ENCODE measurements at regions of chr2 and their contacts with region 1.

Region 1: DNA sequence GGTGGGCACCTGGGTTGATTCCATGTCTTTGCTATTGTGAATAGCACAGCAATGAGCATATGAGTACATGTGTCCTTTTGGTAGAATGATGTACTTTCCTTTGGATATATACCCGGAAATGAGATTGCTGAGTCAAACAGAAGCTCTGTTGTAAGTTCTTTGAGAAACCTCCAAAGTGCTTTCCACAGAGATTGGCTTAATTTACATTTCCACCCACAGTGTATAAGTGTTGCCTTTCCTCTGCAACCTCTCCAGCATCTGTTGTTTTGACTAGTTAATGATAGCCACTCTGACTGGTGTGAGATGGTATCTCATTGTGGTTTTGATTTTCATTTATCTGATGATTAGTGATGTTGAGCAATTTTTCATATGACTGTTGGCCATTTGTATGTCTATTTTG is 194.8 kb downstream of the ZNF804A start:
- DNase-seq: no peak
- H3K4me3 Mint-ChIP-seq: no peak overlapping the region
- H3K27ac Mint-ChIP-seq: no peak overlapping the region
- H3K4me1 Mint-ChIP-seq: peaks cover 3% of the 10 kb centered on the region
- H3K27me3 Mint-ChIP-seq: no peaks in the 10 kb centered on the region

Region 2: DNA sequence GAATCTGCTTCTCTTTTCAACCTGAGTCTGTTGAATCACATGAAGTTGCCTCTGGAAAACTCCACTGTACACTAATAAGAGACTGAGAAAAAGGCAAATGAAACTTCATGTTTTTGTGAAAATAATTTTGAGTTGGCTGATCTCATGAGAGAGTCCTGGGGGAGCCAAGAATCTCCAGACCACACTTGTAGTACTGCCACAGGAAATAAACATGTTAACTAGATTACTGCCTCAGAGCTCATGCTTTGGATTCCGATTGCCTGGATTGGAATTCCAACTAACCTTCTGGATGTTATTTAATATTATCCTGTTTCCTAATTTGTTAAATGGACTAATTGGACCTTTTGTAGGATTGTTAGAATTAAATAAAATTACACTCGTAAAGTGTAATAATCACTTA is 1643.7 kb before region 1 on chr2:
- CTCF ChIA-PET with region 1: no interaction called
- POLR2A ChIA-PET with region 1: no interaction called
- DNase-seq: no peak
- H3K4me3 Mint-ChIP-seq: no peak overlapping the region
- H3K27ac Mint-ChIP-seq: no peak overlapping the region
- H3K4me1 Mint-ChIP-seq: no peaks in the 10 kb centered on the region
- H3K27me3 Mint-ChIP-seq: no peaks in the 10 kb centered on the region

Region 3: DNA sequence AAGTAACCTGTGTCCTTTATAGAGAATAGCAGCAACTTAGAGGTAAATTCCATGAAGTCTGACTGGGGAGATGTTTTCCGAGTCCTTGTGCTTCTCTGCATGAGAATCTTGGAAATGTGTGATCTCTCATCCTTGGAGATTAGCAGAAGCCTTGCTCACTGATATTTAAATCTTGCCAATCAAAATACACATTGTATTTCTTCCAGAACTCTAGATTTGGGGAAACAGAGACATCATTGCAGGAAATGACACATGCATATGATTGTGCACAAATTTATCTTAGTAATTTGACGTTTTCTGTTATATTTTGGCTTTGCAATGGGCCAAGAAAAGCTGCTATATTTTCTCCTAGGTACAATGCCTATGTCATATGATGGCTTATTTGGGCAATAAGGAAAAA is 12.2 kb before region 1 on chr2:
- CTCF ChIA-PET with region 1: no interaction called
- POLR2A ChIA-PET with region 1: no interaction called
- DNase-seq: no peak
- H3K4me3 Mint-ChIP-seq: no peak overlapping the region
- H3K27ac Mint-ChIP-seq: no peak overlapping the region
- H3K4me1 Mint-ChIP-seq: no peaks in the 10 kb centered on the region
- H3K27me3 Mint-ChIP-seq: no peaks in the 10 kb centered on the region

Region 4: DNA sequence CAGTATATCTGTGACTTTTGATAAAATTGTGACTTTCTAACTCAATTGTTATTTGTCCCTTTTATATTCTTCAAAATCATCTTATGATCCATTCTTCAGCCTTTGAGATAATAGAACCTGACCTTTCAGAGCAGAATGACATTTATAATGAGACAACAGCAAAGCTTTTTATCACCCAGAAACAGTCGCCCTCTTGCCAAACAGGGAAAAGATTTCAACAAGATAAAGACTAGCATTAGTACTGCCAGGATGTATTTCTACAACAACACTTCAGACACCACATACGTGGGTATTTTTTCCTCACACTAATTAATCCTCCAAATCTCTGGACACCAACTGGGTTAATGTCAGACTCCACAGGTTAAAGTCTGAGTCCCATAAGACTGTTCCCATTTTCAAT is 54.2 kb after region 1 on chr2:
- CTCF ChIA-PET with region 1: no interaction called
- POLR2A ChIA-PET with region 1: interaction called, 12 read pairs
- DNase-seq: no peak
- H3K4me3 Mint-ChIP-seq: no peak overlapping the region
- H3K27ac Mint-ChIP-seq: no peak overlapping the region
- H3K4me1 Mint-ChIP-seq: no peaks in the 10 kb centered on the region
- H3K27me3 Mint-ChIP-seq: no peaks in the 10 kb centered on the region